ENCODE measurements at regions of chr14 and their contacts with region 1.

Region 1: GRCh38 chr14:51521764-51522163 is 129.9 kb upstream of the FRMD6 start:
- DNase-seq: peak; percentile 41
- H3K4me3 Mint-ChIP-seq: no peak overlapping the region
- H3K27ac Mint-ChIP-seq: no peak overlapping the region
- H3K4me1 Mint-ChIP-seq: peaks cover 25% of the 10 kb centered on the region
- H3K27me3 Mint-ChIP-seq: no peaks in the 10 kb centered on the region
- CTCF ChIP-seq: no peak

Region 2: GRCh38 chr14:51356381-51356780 is 165.4 kb before region 1 on chr14:
- CTCF ChIA-PET with region 1: no interaction called
- POLR2A ChIA-PET with region 1: no interaction called
- intact Hi-C with region 1: no loop called
- DNase-seq: peak; percentile 33
- H3K4me3 Mint-ChIP-seq: no peak overlapping the region
- H3K27ac Mint-ChIP-seq: peak overlapping the region; percentile 87
- H3K4me1 Mint-ChIP-seq: peaks cover 24% of the 10 kb centered on the region
- H3K27me3 Mint-ChIP-seq: no peaks in the 10 kb centered on the region
- CTCF ChIP-seq: no peak

Region 3: GRCh38 chr14:51479584-51480325 is 42.0 kb before region 1 on chr14:
- CTCF ChIA-PET with region 1: no interaction called
- POLR2A ChIA-PET with region 1: no interaction called
- intact Hi-C with region 1: no loop called
- DNase-seq: peak; percentile 17
- H3K4me3 Mint-ChIP-seq: no peak overlapping the region
- H3K27ac Mint-ChIP-seq: no peak overlapping the region
- H3K4me1 Mint-ChIP-seq: peaks cover 2% of the 10 kb centered on the region
- H3K27me3 Mint-ChIP-seq: no peaks in the 10 kb centered on the region
- CTCF ChIP-seq: no peak

Region 4: GRCh38 chr14:51498411-51499227 is 23.1 kb before region 1 on chr14:
- CTCF ChIA-PET with region 1: interaction called, 3 read pairs
- POLR2A ChIA-PET with region 1: interaction called, 13 read pairs
- intact Hi-C with region 1: no loop called
- DNase-seq: peak; percentile 76
- H3K4me3 Mint-ChIP-seq: peak overlapping the region; percentile 57
- H3K27ac Mint-ChIP-seq: peak overlapping the region; percentile 92
- H3K4me1 Mint-ChIP-seq: peaks cover 42% of the 10 kb centered on the region
- H3K27me3 Mint-ChIP-seq: no peaks in the 10 kb centered on the region
- CTCF ChIP-seq: no peak

Region 5: DNA sequence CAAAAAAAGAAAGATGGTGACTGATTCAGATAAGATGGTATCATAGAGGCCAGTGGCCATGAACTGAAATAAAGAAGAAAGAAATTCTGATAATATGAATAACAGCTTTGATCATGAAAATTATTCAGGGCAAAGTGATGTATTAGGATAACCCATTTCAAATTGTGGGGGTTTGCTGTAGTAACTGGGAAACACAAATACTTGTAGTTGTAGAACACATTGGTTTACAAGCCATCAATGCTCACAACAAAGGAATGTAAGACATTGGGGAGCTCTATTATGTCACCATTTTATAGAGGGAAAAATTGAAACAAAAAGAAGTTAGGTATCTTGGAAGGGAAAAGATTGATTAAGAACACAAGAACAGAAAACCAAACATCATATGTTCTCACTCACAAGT is 10.5 kb before region 1 on chr14:
- CTCF ChIA-PET with region 1: interaction called, 3 read pairs
- POLR2A ChIA-PET with region 1: interaction called, 15 read pairs
- intact Hi-C with region 1: no loop called
- DNase-seq: no peak
- H3K4me3 Mint-ChIP-seq: no peak overlapping the region
- H3K27ac Mint-ChIP-seq: no peak overlapping the region
- H3K4me1 Mint-ChIP-seq: peaks cover 23% of the 10 kb centered on the region
- H3K27me3 Mint-ChIP-seq: no peaks in the 10 kb centered on the region
- CTCF ChIP-seq: no peak

Region 6: DNA sequence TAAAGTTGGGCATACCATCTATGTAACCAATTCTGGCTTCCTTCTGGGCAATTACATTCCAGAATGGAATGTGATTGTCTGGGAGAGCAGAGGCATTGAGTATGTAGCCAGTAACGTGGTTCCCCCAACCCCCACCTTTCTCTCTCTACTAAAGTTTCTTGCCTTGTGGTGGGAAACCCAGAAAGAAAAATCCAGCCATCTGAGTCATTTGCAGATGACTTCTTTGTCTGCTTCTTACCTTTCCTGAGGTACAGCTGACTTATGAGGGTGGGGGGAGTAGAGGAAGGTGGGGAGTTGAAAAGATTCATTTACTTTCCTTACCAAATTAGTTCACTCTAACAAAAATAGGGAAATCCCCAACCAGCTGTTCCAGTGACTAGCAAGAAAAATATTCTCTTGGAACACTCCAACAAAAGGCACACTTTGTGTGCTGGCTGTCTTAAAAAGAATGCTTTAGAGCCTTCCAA is 17.8 kb after region 1 on chr14:
- CTCF ChIA-PET with region 1: interaction called, 4 read pairs
- POLR2A ChIA-PET with region 1: interaction called, 31 read pairs
- intact Hi-C with region 1: no loop called
- DNase-seq: peak; percentile 81
- H3K4me3 Mint-ChIP-seq: peak overlapping the region; percentile 49
- H3K27ac Mint-ChIP-seq: peak overlapping the region; percentile 92
- H3K4me1 Mint-ChIP-seq: peaks cover 52% of the 10 kb centered on the region
- H3K27me3 Mint-ChIP-seq: no peaks in the 10 kb centered on the region
- CTCF ChIP-seq: no peak